Psoas muscle (tissue), 8 donors: ENCODE measurements at regions of chr5 and their contacts with region 1.

Region 1: GRCh38 chr5:171131497-171131896 is 177.6 kb upstream of the TLX3 start:
- DNase-seq: no peak
- ATAC-seq: no peak
- H3K4me3 ChIP-seq: no peak overlapping the region
- H3K27ac ChIP-seq: no peak overlapping the region
- H3K4me1 ChIP-seq: no peaks in the 10 kb centered on the region
- H3K27me3 ChIP-seq: no peaks in the 10 kb centered on the region
- CTCF ChIP-seq: no peak

Region 2: GRCh38 chr5:170278611-170279452 is 852.7 kb before region 1 on chr5:
- intact Hi-C with region 1: loop called in 1 of 2 experiments (anchors 5 kb)
- DNase-seq: peak in 1 of 2 donors; percentile 62
- ATAC-seq: peak in 2 of 4 donors; percentile 33 to 38
- H3K4me3 ChIP-seq: no peak overlapping the region
- H3K27ac ChIP-seq: no peak overlapping the region
- H3K4me1 ChIP-seq: no peaks in the 10 kb centered on the region
- H3K27me3 ChIP-seq: no peaks in the 10 kb centered on the region
- CTCF ChIP-seq: no peak

Region 3: GRCh38 chr5:171355302-171355724 is 223.8 kb after region 1 on chr5:
- intact Hi-C with region 1: no loop called
- DNase-seq: no peak
- ATAC-seq: no peak
- H3K4me3 ChIP-seq: no peak overlapping the region
- H3K27ac ChIP-seq: no peak overlapping the region
- H3K4me1 ChIP-seq: no peaks in the 10 kb centered on the region
- H3K27me3 ChIP-seq: peaks cover 0 to 4% (median 0%) of the 10 kb centered on the region in 3 donors
- CTCF ChIP-seq: no peak